Breast epithelium (tissue), 4 donors: ENCODE measurements at regions of chr1 and their contacts with region 1.

Region 1: DNA sequence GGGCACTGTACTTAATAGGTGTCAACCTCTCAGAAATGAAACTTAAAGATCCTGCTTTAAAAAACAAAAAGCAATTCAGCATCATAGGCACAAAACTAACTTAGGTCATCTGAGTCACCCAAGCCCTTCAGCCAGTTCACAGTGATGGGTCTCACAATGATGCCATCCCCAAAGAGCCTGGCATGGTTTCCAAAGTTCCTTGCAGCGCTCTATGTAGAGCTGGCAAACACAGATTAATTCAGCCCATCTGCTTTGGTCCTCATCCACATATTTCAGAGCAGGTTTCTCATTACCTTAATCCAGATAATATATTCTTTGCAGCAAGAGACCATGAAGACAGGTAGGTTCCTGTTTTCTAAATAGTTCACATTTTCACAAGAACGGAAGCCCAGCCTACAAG is 14.6 kb upstream of the PLA2G2C start:
- DNase-seq: no peak
- H3K4me3 ChIP-seq: no peak overlapping the region
- H3K27ac ChIP-seq: no peak overlapping the region
- H3K4me1 ChIP-seq: no peaks in the 10 kb centered on the region
- H3K27me3 ChIP-seq: no peaks in the 10 kb centered on the region
- CTCF ChIP-seq: no peak
- POLR2A ChIP-seq: no peak

Region 2: DNA sequence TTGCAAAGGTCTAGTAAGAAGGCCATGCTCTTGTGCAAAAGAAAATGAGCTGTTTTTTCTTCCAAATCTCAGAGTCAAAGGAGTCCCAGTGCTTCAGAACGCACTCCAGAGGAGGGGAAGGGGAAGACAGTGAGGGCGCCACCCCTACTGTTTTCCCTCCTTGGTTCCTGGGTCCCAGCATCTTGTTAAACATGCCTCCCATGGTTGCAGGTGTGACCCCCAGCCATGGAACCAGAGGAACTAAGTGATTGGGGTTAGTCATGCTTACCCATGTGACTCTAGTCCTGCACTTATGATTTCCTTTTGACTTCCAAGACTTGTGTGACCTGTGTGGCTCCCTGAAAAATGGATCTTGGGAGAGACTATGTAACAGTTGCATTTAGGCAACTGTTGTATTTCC is 906.3 kb before region 1 on chr1:
- intact Hi-C with region 1: loop called (anchors 5 kb)
- DNase-seq: no peak
- H3K4me3 ChIP-seq: no peak overlapping the region
- H3K27ac ChIP-seq: no peak overlapping the region
- H3K4me1 ChIP-seq: no peaks in the 10 kb centered on the region
- H3K27me3 ChIP-seq: no peaks in the 10 kb centered on the region
- CTCF ChIP-seq: no peak
- POLR2A ChIP-seq: no peak

Region 3: DNA sequence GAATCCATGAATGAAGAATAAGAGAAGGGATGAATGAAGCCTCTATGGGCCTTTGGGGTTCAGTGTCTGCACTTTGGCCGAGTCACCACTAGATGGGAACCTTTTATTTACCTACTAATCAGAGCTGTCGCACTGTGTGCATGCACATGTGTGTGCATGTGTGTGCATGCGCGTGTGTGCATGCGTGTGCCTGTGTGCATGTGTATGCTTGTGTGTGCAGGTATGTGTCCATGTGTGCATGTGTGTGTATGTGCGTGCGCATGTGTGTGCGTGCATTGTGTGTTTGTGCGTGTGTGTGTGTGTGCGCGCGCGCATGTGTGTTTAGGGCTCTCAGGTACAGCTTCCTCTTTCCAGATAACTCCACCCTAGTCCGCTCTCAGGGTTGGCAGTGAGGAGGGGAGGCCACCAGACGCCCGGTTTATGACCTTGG is 35.4 kb before region 1 on chr1:
- intact Hi-C with region 1: no loop called
- DNase-seq: no peak
- H3K4me3 ChIP-seq: no peak overlapping the region
- H3K27ac ChIP-seq: no peak overlapping the region
- H3K4me1 ChIP-seq: no peaks in the 10 kb centered on the region
- H3K27me3 ChIP-seq: no peaks in the 10 kb centered on the region
- CTCF ChIP-seq: peak in 1 of 3 donors; percentile 12
- POLR2A ChIP-seq: no peak